AG04449 (cell line): ENCODE measurements at regions of chr2 and their contacts with region 1.

Region 1: GRCh38 chr2:196750982-196751635 is 48.4 kb downstream of the GTF3C3 start:
- DNase-seq: peak; percentile 10
- H3K4me3 ChIP-seq: no peak overlapping the region
- CTCF ChIP-seq: peak; percentile 67

Region 2: GRCh38 chr2:196725882-196726281 is 25.2 kb before region 1 on chr2:
- CTCF ChIA-PET with region 1: interaction called, 17 read pairs
- POLR2A ChIA-PET with region 1: no interaction called
- DNase-seq: no peak
- H3K4me3 ChIP-seq: no peak overlapping the region
- CTCF ChIP-seq: no peak

Region 3: DNA sequence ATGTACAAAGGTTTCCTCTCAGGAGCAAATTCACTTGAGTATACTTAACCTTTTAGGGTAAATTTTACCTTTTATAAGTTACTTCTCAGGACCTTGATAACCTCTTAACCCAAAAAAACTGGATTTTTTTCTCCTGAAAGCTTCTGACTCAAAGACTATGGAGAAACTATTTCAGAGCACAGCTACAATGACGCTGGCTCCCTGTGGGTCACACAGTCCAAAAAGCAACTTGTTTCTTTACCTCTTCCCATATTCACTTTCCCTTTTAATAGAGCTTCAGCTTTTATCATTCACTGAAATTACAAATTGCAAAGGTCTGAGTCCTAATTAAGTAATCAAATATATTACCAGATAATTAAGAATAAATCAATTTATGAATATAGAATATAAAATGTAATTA is 16.0 kb after region 1 on chr2:
- CTCF ChIA-PET with region 1: interaction called, 17 read pairs
- POLR2A ChIA-PET with region 1: no interaction called
- DNase-seq: no peak
- H3K4me3 ChIP-seq: no peak overlapping the region
- CTCF ChIP-seq: no peak